ENCODE measurements at regions of chr20 and their contacts with region 1.

Region 1: DNA sequence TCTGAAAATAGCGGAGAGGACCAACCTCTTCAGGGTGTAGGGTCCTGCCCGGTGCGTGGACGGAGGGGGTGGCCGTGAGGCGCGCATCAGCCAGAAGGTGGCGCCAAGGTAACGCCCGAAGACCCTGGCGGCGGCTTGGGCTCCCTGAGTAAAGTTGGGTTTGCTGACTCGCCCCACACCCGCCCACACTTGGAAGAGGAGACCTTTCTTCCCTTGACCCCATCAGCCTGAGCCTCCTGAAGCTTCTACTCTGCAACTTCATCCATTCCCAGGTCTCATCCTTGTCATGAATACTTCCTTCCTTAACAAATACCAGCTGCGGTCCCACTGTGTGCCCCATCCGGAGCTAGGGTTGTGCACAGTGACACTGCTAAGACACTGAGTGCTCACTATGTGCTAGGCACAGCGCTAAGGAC is 14.6 kb downstream of the CD40 start:
- DNase-seq: peak; percentile 43
- ATAC-seq: peak; percentile 96
- H3K4me3 ChIP-seq: no peak overlapping the region
- H3K27ac ChIP-seq: no peak overlapping the region
- H3K4me1 ChIP-seq: no peaks in the 10 kb centered on the region
- H3K27me3 ChIP-seq: peaks cover 46% of the 10 kb centered on the region
- CTCF ChIP-seq: peak; percentile 81
- POLR2A ChIP-seq: no peak
- RAD21 ChIP-seq: peak; percentile 85

Region 2: DNA sequence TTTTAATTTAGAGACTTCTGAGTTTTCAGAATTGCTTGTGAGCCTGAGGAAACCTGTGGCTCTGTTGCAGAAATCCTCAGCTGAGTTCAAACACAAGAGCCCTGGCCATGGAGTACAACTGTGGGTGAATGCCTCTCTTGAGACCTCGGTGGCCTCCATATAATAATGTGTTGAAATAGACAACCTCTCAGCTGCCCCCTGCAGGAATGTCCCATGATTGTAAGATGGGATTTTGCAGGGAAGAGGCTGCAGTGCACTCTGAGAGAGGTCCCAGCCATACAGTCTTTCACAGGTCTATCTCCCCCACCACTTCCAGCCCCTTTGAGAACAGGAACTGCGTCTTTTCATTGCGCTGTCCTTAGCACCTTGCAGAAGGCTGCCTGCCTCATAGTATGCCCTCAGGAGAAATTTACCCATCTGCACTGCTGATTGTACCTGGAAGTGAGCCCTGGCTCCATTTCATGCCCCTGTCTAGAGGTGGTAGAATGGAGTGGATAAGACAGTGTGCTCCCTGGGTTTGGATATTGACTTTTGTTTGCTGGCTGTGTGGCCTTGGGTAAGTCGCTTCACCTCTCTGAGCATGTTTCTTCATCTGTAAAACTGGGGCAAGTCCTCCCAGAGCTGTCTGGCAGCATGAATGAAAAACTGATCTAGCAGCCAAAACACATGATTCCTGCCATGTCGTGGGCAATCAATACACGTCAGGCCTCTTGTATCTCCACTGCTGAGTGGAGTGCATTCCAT is 192.4 kb after region 1 on chr20:
- CTCF ChIA-PET with region 1: no interaction called
- POLR2A ChIA-PET with region 1: no interaction called
- dilution Hi-C with region 1: no loop called
- in situ Hi-C with region 1: no loop called
- intact Hi-C with region 1: loop called (anchors 5 kb)
- DNase-seq: peak; percentile 7
- ATAC-seq: peak; percentile 73
- H3K4me3 ChIP-seq: no peak overlapping the region
- H3K27ac ChIP-seq: no peak overlapping the region
- H3K4me1 ChIP-seq: no peaks in the 10 kb centered on the region
- H3K27me3 ChIP-seq: peaks cover 48% of the 10 kb centered on the region
- CTCF ChIP-seq: peak; percentile 38
- POLR2A ChIP-seq: no peak
- RAD21 ChIP-seq: peak; percentile 30; the same call in 1 of the 2 replicates

Region 3: GRCh38 chr20:46349035-46349741 is 216.5 kb after region 1 on chr20:
- CTCF ChIA-PET with region 1: interaction called, 7 read pairs
- POLR2A ChIA-PET with region 1: no interaction called
- dilution Hi-C with region 1: no loop called
- in situ Hi-C with region 1: no loop called
- intact Hi-C with region 1: loop called (anchors 1 kb)
- DNase-seq: peak; percentile 31
- ATAC-seq: peak; percentile 42; the same call in 1 of the 2 replicates
- H3K4me3 ChIP-seq: no peak overlapping the region
- H3K27ac ChIP-seq: no peak overlapping the region
- H3K4me1 ChIP-seq: peaks cover 12% of the 10 kb centered on the region
- H3K27me3 ChIP-seq: no peaks in the 10 kb centered on the region; the same call in 1 of the 2 replicates
- CTCF ChIP-seq: peak; percentile 73
- POLR2A ChIP-seq: no peak
- RAD21 ChIP-seq: peak; percentile 77

Region 4: GRCh38 chr20:46411637-46412036 is 278.9 kb after region 1 on chr20:
- CTCF ChIA-PET with region 1: interaction called, 3 read pairs
- POLR2A ChIA-PET with region 1: no interaction called
- dilution Hi-C with region 1: no loop called
- in situ Hi-C with region 1: no loop called
- intact Hi-C with region 1: loop called (anchors 1 kb)
- DNase-seq: no peak
- ATAC-seq: no peak
- H3K4me3 ChIP-seq: no peak overlapping the region
- H3K27ac ChIP-seq: no peak overlapping the region
- H3K4me1 ChIP-seq: peaks cover 3% of the 10 kb centered on the region; the same call in 1 of the 2 replicates
- H3K27me3 ChIP-seq: peaks cover 18% of the 10 kb centered on the region
- CTCF ChIP-seq: no peak
- POLR2A ChIP-seq: no peak
- RAD21 ChIP-seq: no peak

Region 5: DNA sequence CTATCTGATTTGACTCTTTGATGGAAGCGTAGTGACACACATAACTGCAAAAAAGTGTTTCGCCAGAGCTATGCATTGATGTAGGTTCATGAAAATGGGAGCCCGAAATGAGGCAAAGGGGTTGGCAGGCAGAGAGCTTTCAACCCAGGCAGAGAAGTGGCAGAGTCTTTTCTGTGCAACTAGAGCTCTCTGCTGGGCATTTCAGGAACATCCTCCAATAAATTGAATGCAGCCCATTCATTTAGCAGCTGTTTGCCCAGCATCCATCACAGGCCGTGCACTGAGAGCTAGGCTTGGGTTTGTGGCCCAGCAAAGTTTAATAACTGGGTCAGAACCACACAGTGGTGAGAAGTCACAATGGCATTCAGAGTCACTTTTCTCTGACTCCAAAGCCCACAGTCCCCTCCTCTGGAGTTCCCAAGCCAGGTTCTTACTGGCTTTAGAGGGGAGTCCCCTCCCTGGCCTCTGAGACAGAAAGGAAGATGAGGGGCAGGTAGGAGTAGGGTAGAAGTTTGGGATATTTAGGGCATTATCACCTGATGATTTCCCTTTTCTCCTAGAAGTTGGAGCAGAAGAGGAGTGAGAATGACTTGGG is 305.5 kb after region 1 on chr20:
- CTCF ChIA-PET with region 1: no interaction called
- POLR2A ChIA-PET with region 1: no interaction called
- dilution Hi-C with region 1: no loop called
- in situ Hi-C with region 1: no loop called
- intact Hi-C with region 1: loop called (anchors 1 kb)
- DNase-seq: peak; percentile 32
- ATAC-seq: peak; percentile 76; the same call in 1 of the 2 replicates
- H3K4me3 ChIP-seq: no peak overlapping the region
- H3K27ac ChIP-seq: no peak overlapping the region
- H3K4me1 ChIP-seq: no peaks in the 10 kb centered on the region
- H3K27me3 ChIP-seq: no peaks in the 10 kb centered on the region; the same call in 1 of the 2 replicates
- CTCF ChIP-seq: peak; percentile 49
- POLR2A ChIP-seq: no peak
- RAD21 ChIP-seq: peak; percentile 55

Region 6: GRCh38 chr20:46485431-46485830 is 352.7 kb after region 1 on chr20:
- CTCF ChIA-PET with region 1: no interaction called
- POLR2A ChIA-PET with region 1: no interaction called
- dilution Hi-C with region 1: no loop called
- in situ Hi-C with region 1: no loop called
- intact Hi-C with region 1: loop called (anchors 2 kb)
- DNase-seq: no peak
- ATAC-seq: no peak
- H3K4me3 ChIP-seq: no peak overlapping the region
- H3K27ac ChIP-seq: no peak overlapping the region
- H3K4me1 ChIP-seq: no peaks in the 10 kb centered on the region
- H3K27me3 ChIP-seq: no peaks in the 10 kb centered on the region; the same call in 1 of the 2 replicates
- CTCF ChIP-seq: no peak
- POLR2A ChIP-seq: no peak
- RAD21 ChIP-seq: no peak

Measured in IMR-90 (cell line).